Activated CD4-positive, alpha-beta T cell treated with anti-CD3 and anti-CD28 coated beads, Interleukin-2, amount 10 ng/mL, durations not matched to agents 24 days and 14 days (primary cell): ENCODE measurements at regions of chr3 and their contacts with region 1.

Region 1: GRCh38 chr3:30835667-30836066 is 58.8 kb downstream of the GADL1 start:
- DNase-seq: no peak
- H3K4me3 Mint-ChIP-seq: no peak overlapping the region
- H3K27ac Mint-ChIP-seq: no peak overlapping the region
- H3K4me1 Mint-ChIP-seq: no peaks in the 10 kb centered on the region
- H3K27me3 Mint-ChIP-seq: peaks cover 28% of the 10 kb centered on the region

Region 2: GRCh38 chr3:30258426-30259392 is 577.0 kb before region 1 on chr3:
- intact Hi-C with region 1: no loop called
- DNase-seq: no peak
- H3K4me3 Mint-ChIP-seq: no peak overlapping the region
- H3K27ac Mint-ChIP-seq: no peak overlapping the region
- H3K4me1 Mint-ChIP-seq: peaks cover 11% of the 10 kb centered on the region
- H3K27me3 Mint-ChIP-seq: no peaks in the 10 kb centered on the region

Region 3: DNA sequence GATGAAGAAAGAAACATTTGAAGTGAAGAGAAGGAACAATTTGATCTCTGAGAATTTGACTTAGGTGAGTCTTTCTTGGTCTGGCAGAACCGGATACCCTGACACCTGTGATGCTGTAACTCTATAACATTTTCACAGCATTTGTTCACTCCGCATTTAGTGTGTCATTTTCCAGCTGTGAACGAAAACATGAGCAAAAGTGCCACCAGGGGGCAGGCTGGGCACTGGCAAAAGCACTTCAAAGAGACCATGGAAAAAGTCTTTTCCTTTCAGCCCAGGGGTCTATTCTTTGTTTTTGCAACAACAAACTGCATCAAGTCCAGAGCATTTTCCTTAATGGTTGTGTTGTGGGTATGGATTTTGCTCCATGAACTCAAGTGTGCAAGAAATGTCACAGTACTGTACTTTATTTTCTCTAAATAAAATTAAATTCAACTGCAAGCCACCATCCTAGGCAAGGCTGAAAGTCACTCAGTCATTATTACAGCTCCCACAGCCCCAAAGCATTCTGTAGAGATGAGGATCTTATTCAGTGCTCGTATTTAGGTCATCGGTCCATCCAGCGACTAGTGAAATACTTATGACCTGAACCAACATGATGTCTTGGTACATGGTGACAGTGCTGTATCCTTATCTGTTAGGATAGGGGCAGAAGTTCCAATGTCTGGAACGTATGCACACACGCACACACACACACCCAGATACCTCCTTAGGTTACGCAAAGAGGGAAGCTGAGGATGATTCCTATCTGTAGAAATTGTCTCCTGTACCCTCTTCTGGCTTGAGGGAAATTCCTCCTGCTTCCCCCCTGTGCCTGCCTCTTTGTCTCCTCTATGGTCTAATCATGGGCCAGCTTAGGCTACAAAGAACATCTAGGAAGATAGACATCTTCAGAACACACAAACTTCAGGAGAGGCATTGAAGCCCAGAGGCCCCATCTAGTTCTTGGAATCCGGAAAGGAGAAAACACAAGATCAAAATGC is 66.7 kb before region 1 on chr3:
- intact Hi-C with region 1: loop called (anchors 5 kb)
- DNase-seq: peak; percentile 90
- H3K4me3 Mint-ChIP-seq: no peak overlapping the region
- H3K27ac Mint-ChIP-seq: no peak overlapping the region
- H3K4me1 Mint-ChIP-seq: peaks cover 4% of the 10 kb centered on the region
- H3K27me3 Mint-ChIP-seq: peaks cover 25% of the 10 kb centered on the region

Region 4: GRCh38 chr3:30964612-30965011 is 128.9 kb after region 1 on chr3:
- intact Hi-C with region 1: no loop called
- DNase-seq: peak; percentile 77
- H3K4me3 Mint-ChIP-seq: no peak overlapping the region
- H3K27ac Mint-ChIP-seq: peak overlapping the region; percentile 18
- H3K4me1 Mint-ChIP-seq: peaks cover 19% of the 10 kb centered on the region
- H3K27me3 Mint-ChIP-seq: peaks cover 16% of the 10 kb centered on the region